H1 (cell line): ENCODE measurements at regions of chr1 and their contacts with region 1.

Region 1: GRCh38 chr1:44131411-44131810 is 10.0 kb downstream of the KLF18 start:
- DNase-seq: no peak
- H3K4me3 ChIP-seq: no peak overlapping the region
- H3K27ac ChIP-seq: no peak overlapping the region
- H3K4me1 ChIP-seq: no peaks in the 10 kb centered on the region
- H3K27me3 ChIP-seq: no peaks in the 10 kb centered on the region
- CTCF ChIP-seq: no peak
- EP300 ChIP-seq: no peak
- POLR2A ChIP-seq: no peak
- RAD21 ChIP-seq: no peak

Region 2: GRCh38 chr1:44103270-44104131 is 27.9 kb before region 1 on chr1:
- CTCF ChIA-PET with region 1: interaction called, 19 read pairs
- POLR2A ChIA-PET with region 1: no interaction called
- DNase-seq: peak in 1 of 2 experiments; percentile 80
- H3K4me3 ChIP-seq: no peak overlapping the region
- H3K27ac ChIP-seq: no peak overlapping the region
- H3K4me1 ChIP-seq: no peaks in the 10 kb centered on the region
- H3K27me3 ChIP-seq: peaks cover 0 to 2% (median 0%) of the 10 kb centered on the region in 4 experiments; a peak in 1 of 7 replicates
- CTCF ChIP-seq: peak; percentile 53 to 63 (median 54)
- EP300 ChIP-seq: no peak
- POLR2A ChIP-seq: no peak
- RAD21 ChIP-seq: peak; percentile 44 to 61

Region 3: GRCh38 chr1:44119525-44119924 is 11.9 kb before region 1 on chr1:
- CTCF ChIA-PET with region 1: no interaction called
- POLR2A ChIA-PET with region 1: no interaction called
- DNase-seq: no peak
- H3K4me3 ChIP-seq: no peak overlapping the region
- H3K27ac ChIP-seq: no peak overlapping the region
- H3K4me1 ChIP-seq: peaks cover 0 to 3% (median 0%) of the 10 kb centered on the region in 4 experiments; a peak in 2 of 7 replicates
- H3K27me3 ChIP-seq: no peaks in the 10 kb centered on the region
- CTCF ChIP-seq: no peak
- EP300 ChIP-seq: no peak
- POLR2A ChIP-seq: no peak
- RAD21 ChIP-seq: no peak